GM13977 (cell line): ENCODE measurements at regions of chr18 and their contacts with region 1.

Region 1: GRCh38 chr18:48675352-48675761 is 136.5 kb downstream of the CTIF start:
- DNase-seq: peak; percentile 88
- CTCF ChIP-seq: peak; percentile 96

Region 2: GRCh38 chr18:49238433-49239042 is 563.2 kb after region 1 on chr18:
- in situ Hi-C with region 1: loop called (anchors 25 kb)
- DNase-seq: peak; percentile 12
- CTCF ChIP-seq: peak; percentile 52

Region 3: DNA sequence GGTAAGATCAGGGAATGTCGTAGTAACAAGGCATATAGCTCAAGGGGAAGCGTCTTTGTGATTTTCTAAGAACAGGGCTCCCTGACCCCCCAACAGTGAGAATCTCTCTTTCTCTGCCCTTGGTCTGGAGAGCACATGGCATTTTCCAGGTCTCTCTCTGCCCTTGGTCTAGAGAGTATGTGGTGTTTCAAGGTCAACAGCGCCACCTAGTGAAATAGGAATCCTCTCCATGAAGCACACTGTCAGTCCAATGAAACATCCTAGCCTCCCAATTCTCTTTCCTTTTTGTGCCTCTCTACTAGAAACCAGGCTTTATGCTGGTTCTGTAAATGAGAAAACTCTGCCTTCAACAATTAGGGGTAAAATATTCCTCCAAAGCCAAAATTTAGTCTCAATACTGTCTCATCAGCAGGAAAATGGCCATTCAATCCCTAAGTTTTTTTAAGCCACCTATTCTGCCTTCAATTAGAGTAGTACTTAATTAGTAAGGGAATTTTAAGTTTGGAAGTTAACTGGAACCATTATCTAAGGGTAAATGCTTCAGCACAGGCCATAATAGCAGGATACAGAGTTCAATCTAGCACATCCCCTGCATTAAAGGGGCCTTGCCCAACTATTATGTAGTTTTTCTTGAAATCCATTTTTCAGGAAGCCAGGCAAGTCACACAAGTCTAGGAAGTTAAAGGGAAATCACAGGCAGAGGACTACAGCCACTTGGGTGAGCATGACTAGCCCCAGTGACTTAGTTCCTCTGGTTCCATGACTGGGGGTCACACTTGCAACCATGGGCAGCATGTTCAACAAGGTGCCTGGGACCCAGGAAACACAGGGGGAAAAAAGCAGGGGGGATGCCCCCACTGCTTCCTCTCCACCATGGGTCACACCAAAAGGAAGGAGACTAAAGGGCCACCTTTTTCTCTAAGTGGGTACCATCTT is 772.7 kb after region 1 on chr18:
- in situ Hi-C with region 1: loop called (anchors 25 kb)
- DNase-seq: no peak
- CTCF ChIP-seq: peak; percentile 39